ENCODE measurements at regions of chr10 and their contacts with region 1.

Region 1: DNA sequence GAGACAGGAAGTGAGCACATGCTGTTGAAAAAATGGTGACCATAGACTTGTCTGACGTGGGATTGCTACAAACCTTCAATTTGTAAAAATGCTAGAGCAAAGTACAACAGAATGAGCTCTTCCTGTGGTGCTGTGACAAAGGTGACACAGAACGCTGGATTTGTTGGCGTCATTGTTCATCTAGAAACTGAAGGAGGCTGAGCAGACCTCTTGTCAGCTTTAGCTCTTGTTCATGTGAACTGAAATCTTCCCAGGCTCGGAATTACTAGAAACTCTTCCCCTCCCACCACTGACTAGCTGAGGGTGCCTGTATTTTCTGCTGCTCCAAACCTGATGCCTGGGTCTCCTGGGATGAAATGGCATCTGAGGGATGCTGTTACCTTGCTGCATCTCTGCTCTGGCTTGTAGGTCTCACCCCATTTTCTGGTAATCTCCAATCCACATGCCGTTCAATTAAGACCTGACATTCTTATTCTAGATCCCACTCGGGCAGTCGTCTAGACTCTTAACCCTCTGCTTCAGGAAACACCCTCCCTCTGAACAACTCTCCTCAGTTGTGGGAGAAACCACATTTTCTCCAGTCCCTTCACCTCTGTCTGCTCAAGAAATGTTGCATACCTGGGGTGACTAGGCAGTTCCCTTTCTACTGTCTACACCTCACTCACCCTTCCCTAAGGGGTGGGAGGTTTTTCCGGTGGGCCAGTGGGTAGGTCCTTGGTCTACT is 349.3 kb downstream of the CXCL12 start:
- DNase-seq: peak; percentile 57
- ATAC-seq: peak; percentile 68
- H3K4me3 ChIP-seq: no peak overlapping the region
- H3K27ac ChIP-seq: no peak overlapping the region
- H3K4me1 ChIP-seq: 0 out of 2 replicates have a peak, but pooled peaks cover 3% of the 10 kb centered on the region
- H3K27me3 ChIP-seq: no peaks in the 10 kb centered on the region
- CTCF ChIP-seq: no peak
- EP300 ChIP-seq: no peak
- POLR2A ChIP-seq: no peak
- RAD21 ChIP-seq: no peak

Region 2: GRCh38 chr10:44020322-44021111 is 15.1 kb before region 1 on chr10:
- CTCF ChIA-PET with region 1: interaction called, 11 read pairs
- POLR2A ChIA-PET with region 1: interaction called, 4 read pairs
- RAD21 ChIA-PET with region 1: interaction called, 13 read pairs
- SMC1A ChIA-PET with region 1: interaction called, 13 read pairs
- in situ Hi-C with region 1: no loop called
- intact Hi-C with region 1: no loop called
- DNase-seq: peak; percentile 42
- ATAC-seq: peak; percentile 93
- H3K4me3 ChIP-seq: no peak overlapping the region
- H3K27ac ChIP-seq: peak overlapping the region; percentile 36
- H3K4me1 ChIP-seq: peaks cover 18% of the 10 kb centered on the region; the same call in 1 of the 2 replicates
- H3K27me3 ChIP-seq: no peaks in the 10 kb centered on the region; a peak in 1 of 4 replicates
- CTCF ChIP-seq: no peak
- EP300 ChIP-seq: no peak
- POLR2A ChIP-seq: no peak
- RAD21 ChIP-seq: no peak

Region 3: DNA sequence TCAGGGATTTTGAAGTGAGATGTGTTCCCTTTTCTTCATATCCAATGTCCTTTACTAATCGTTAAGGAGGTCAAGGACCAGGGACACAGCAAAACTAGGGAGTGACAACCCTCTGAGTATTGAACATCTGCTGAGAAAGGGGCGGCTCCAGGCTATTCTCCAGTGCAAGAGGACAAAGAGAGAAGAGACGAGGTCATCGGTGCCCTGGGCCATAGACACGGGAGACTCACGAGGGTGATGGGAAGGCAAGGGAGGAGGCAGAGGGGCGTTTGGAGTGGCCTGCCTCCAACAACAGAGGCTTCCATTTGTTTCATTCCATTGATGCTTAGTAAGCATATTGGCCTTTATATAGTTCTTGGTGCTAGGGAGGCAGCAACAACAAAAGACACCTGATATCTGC is 80.8 kb after region 1 on chr10:
- CTCF ChIA-PET with region 1: no interaction called
- POLR2A ChIA-PET with region 1: no interaction called
- RAD21 ChIA-PET with region 1: no interaction called
- SMC1A ChIA-PET with region 1: no interaction called
- in situ Hi-C with region 1: no loop called
- intact Hi-C with region 1: no loop called
- DNase-seq: no peak
- ATAC-seq: no peak
- H3K4me3 ChIP-seq: no peak overlapping the region
- H3K27ac ChIP-seq: no peak overlapping the region
- H3K4me1 ChIP-seq: no peaks in the 10 kb centered on the region
- H3K27me3 ChIP-seq: no peaks in the 10 kb centered on the region
- CTCF ChIP-seq: no peak
- EP300 ChIP-seq: no peak
- POLR2A ChIP-seq: no peak
- RAD21 ChIP-seq: no peak